ENCODE measurements at regions of chr2 and their contacts with region 1.

Region 1: DNA sequence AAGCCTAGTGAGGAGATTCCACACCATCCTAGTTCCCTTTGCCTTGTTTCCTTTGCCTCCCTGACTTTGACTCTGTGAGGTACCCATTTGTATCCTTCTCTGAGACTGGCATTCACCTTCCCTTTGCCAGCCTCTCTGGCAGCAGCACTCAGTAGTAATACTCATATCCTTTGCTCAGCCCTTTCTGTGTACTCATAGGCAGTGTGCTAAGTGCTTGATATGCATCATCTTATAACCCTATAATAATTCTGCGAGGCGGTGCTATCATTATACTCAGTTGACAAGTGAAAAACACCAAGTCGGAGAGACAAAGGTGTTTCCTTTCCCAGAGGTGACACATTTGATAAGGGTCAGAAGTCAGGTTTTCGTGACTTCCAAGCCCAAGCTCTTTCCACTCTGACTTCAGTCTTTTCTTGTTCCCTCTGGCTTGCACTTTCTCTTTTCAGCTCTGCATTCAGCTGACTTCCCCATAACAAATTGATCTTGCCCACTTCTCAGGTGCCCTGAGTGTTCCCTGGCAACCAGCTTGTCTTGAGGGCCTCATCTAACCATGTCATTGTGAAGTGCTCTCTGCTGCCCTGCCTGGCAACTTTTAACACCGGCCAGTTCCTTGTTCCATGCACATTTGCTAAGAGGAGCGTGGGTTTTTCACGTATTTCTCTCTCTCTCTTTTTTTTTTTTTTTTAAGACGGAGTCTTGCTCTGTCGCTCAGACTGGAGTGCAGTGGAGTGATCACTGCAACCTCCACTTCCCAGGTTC is 94.5 kb upstream of the UPP2 start:
- DNase-seq: no peak
- H3K4me3 ChIP-seq: no peak overlapping the region
- H3K27ac ChIP-seq: no peak overlapping the region
- H3K4me1 ChIP-seq: peaks cover 18% of the 10 kb centered on the region
- H3K27me3 ChIP-seq: no peaks in the 10 kb centered on the region
- CTCF ChIP-seq: no peak

Region 2: DNA sequence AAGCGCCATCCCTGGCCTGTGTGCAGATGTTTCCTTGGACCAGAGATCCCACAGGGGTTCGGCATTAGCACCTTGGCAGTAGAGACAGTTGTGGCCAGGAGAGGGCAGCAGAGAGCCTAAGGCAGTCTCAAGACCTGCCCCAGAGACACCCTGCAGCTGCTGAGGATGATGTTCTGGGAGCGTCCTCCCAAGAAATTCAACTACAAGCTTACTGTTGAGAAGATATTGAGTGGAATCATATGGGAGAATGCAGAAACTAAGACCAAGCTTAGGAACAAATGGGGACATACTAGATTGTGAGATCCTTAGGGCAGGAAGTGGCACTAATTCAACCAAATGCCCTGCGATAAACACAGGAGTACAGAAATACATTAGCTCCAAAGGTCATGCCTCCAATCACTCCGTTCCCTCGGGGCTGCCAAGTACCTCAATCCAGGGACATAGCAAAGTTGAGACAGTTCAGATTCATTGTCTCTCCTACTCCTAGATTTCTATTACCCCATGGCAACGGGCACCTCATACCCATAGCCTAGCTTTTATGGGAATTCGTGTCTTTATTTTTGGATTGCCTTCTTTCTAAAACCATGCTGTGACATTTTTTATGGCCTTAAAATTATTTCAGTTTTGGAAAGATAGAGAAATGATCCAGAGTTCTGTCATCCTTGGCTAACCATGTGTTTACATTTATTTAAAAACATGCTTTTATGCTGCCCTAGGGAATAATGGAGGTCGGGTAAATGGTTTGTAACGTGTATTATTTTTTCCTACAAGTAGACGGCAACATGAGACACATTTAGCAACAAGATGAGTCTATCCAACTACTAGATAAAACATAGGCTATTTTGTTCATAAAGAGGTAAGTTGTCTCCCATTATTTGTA is 679.3 kb before region 1 on chr2:
- CTCF ChIA-PET with region 1: no interaction called
- dilution Hi-C with region 1: no loop called
- in situ Hi-C with region 1: no loop called
- intact Hi-C with region 1: loop called (anchors 2 kb)
- DNase-seq: peak; percentile 56
- H3K4me3 ChIP-seq: no peak overlapping the region
- H3K27ac ChIP-seq: no peak overlapping the region
- H3K4me1 ChIP-seq: no peaks in the 10 kb centered on the region
- H3K27me3 ChIP-seq: no peaks in the 10 kb centered on the region
- CTCF ChIP-seq: peak; percentile 90 to 97

Region 3: GRCh38 chr2:157386247-157386646 is 620.9 kb before region 1 on chr2:
- CTCF ChIA-PET with region 1: no interaction called
- dilution Hi-C with region 1: no loop called
- in situ Hi-C with region 1: no loop called
- intact Hi-C with region 1: no loop called
- DNase-seq: no peak
- H3K4me3 ChIP-seq: no peak overlapping the region
- H3K27ac ChIP-seq: no peak overlapping the region
- H3K4me1 ChIP-seq: no peaks in the 10 kb centered on the region
- H3K27me3 ChIP-seq: peaks cover 2% of the 10 kb centered on the region
- CTCF ChIP-seq: no peak

Region 4: GRCh38 chr2:157497638-157498314 is 509.4 kb before region 1 on chr2:
- CTCF ChIA-PET with region 1: no interaction called
- dilution Hi-C with region 1: no loop called
- in situ Hi-C with region 1: loop called (anchors 10 to 25 kb)
- intact Hi-C with region 1: loop called (anchors 1 kb)
- DNase-seq: peak; percentile 31
- H3K4me3 ChIP-seq: no peak overlapping the region
- H3K27ac ChIP-seq: no peak overlapping the region
- H3K4me1 ChIP-seq: no peaks in the 10 kb centered on the region
- H3K27me3 ChIP-seq: no peaks in the 10 kb centered on the region
- CTCF ChIP-seq: peak; percentile 83 to 85

Region 5: GRCh38 chr2:157784169-157784822 is 222.8 kb before region 1 on chr2:
- CTCF ChIA-PET with region 1: no interaction called
- dilution Hi-C with region 1: loop called (anchors 25 kb)
- in situ Hi-C with region 1: loop called in 1 of 2 experiments (anchors 10 kb)
- intact Hi-C with region 1: loop called (anchors 2 kb)
- DNase-seq: peak; percentile 89
- H3K4me3 ChIP-seq: peak overlapping the region; percentile 5 to 24 (median 13)
- H3K27ac ChIP-seq: peak overlapping the region; percentile 67
- H3K4me1 ChIP-seq: peaks cover 36% of the 10 kb centered on the region
- H3K27me3 ChIP-seq: no peaks in the 10 kb centered on the region
- CTCF ChIP-seq: no peak

Region 6: DNA sequence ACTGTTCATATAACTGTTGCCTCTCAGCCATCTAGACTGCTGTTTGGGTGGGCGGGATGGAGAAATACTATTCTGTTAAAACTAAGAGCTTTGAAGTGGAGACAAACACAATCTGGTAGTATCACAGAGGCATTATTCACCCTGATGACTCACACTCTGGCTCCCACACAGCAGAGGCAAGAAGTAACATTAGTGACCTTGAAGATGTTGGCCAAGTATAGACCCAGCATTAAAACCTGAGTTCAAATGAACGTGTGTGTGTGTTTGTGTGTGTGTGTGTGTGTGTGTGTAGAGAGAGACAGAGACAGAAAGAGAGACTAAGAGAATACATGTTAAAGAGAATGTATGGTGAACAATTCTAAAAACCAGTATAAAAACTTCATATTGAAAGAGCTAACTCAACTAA is 108.5 kb before region 1 on chr2:
- CTCF ChIA-PET with region 1: no interaction called
- dilution Hi-C with region 1: no loop called
- in situ Hi-C with region 1: no loop called
- intact Hi-C with region 1: no loop called
- DNase-seq: peak; percentile 84
- H3K4me3 ChIP-seq: no peak overlapping the region
- H3K27ac ChIP-seq: no peak overlapping the region
- H3K4me1 ChIP-seq: peaks cover 28% of the 10 kb centered on the region
- H3K27me3 ChIP-seq: no peaks in the 10 kb centered on the region
- CTCF ChIP-seq: no peak

Region 7: DNA sequence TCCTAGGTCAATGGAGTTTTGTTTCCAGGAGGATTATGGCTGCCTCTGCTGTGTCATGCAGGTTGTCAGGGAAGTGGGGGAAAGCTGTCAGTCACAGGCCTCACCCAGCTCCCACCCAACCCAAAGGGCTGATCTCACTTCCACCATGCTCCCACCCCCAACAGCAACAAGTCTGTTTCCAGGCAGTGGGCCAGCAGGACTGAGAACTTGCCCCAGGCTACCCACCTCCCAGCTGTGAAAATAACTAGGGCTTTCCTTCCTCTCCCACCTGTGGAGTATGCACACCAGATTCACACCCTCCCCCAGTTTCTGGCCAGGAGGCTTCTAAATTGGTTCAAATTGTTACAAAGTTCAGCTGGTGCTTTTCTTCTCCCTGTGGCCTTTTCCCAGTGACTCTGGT is 35.4 kb before region 1 on chr2:
- CTCF ChIA-PET with region 1: no interaction called
- dilution Hi-C with region 1: no loop called
- in situ Hi-C with region 1: no loop called
- intact Hi-C with region 1: no loop called
- DNase-seq: peak; percentile 67
- H3K4me3 ChIP-seq: no peak overlapping the region
- H3K27ac ChIP-seq: no peak overlapping the region
- H3K4me1 ChIP-seq: peaks cover 8% of the 10 kb centered on the region
- H3K27me3 ChIP-seq: no peaks in the 10 kb centered on the region
- CTCF ChIP-seq: no peak

Region 8: GRCh38 chr2:158024288-158024898 is 17.3 kb after region 1 on chr2:
- CTCF ChIA-PET with region 1: interaction called, 24 read pairs
- dilution Hi-C with region 1: no loop called
- in situ Hi-C with region 1: no loop called
- intact Hi-C with region 1: no loop called
- DNase-seq: peak; percentile 27
- H3K4me3 ChIP-seq: no peak overlapping the region
- H3K27ac ChIP-seq: no peak overlapping the region
- H3K4me1 ChIP-seq: peaks cover 7% of the 10 kb centered on the region
- H3K27me3 ChIP-seq: no peaks in the 10 kb centered on the region
- CTCF ChIP-seq: peak; percentile 79 to 96

Region 9: DNA sequence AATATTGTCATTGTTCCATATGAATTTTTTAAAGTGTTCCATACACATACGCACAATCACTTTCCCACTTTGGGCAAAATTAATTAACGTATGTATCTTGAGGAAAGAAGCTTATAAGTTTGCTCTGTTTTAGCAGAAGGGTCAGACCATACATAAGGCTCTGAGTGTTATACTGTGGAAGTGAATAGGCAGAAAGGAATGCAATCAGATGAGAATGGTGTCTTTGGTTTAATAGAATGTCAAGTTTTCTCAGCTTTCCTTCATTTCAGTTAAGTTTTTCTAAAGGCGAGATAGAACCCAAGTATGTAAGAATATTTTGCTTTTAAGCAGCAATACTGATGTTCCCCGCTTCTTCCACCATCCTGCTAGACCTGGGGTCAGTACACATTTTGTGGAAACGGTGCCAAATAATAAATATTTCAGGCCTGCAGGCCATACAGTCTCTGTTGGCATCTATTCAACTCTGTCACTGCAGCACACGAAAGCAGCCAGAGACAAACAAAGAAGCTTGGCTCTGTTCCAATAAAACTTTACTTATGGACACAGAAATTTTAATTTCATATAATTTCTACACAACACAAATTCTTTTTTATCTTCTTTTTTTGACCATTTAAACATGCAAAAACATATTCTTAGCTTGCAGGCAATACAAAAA is 195.1 kb after region 1 on chr2:
- CTCF ChIA-PET with region 1: no interaction called
- dilution Hi-C with region 1: no loop called
- in situ Hi-C with region 1: no loop called
- intact Hi-C with region 1: no loop called
- DNase-seq: peak; percentile 54
- H3K4me3 ChIP-seq: no peak overlapping the region
- H3K27ac ChIP-seq: no peak overlapping the region
- H3K4me1 ChIP-seq: peaks cover 22% of the 10 kb centered on the region
- H3K27me3 ChIP-seq: no peaks in the 10 kb centered on the region
- CTCF ChIP-seq: no peak